CD4-positive, alpha-beta T cell (primary cell): ENCODE measurements at regions of chr6 and their contacts with region 1.

Region 1: GRCh38 chr6:25441663-25442270 is 162.6 kb downstream of the CARMIL1 start:
- DNase-seq: peak in 4 of 14 experiments; percentile 13 to 55 (median 32)
- ATAC-seq: peak; percentile 92
- H3K4me3 ChIP-seq: no peak overlapping the region
- H3K4me3 Mint-ChIP-seq: no peak overlapping the region
- H3K27ac ChIP-seq: peak overlapping the region; percentile 49 to 61
- H3K27ac Mint-ChIP-seq: no peak overlapping the region
- H3K4me1 ChIP-seq: peaks cover 5% of the 10 kb centered on the region
- H3K4me1 Mint-ChIP-seq: peaks cover 27% of the 10 kb centered on the region
- H3K27me3 ChIP-seq: no peaks in the 10 kb centered on the region
- H3K27me3 Mint-ChIP-seq: no peaks in the 10 kb centered on the region
- CTCF ChIP-seq: no peak

Region 2: DNA sequence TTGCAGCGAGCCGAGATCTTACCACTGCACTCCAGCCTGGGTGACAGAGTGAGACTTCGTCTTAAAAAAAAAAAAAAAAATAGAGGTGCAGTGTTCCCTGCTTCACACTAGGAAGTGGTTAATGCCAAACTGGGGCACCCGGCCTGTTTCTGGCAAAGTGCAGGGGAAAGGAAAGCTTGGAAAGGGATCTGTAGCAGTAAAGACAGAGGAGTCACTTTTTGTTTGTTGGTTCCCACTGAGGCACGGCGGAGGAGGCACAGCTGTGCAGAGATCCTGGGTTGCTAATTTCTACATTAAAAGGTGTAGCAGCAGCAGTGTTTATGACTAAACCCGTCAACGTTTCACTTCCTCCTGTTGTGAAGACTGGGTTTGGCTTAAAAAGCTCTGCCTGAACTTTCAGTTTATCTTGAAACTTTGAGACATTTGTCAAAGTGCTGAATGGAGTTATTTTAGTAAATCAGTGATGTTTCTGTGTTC is 37.0 kb before region 1 on chr6:
- CTCF ChIA-PET with region 1: no interaction called
- POLR2A ChIA-PET with region 1: interaction called, 18 read pairs
- intact Hi-C with region 1: no loop called
- DNase-seq: peak; percentile 3 to 66 (median 23)
- ATAC-seq: peak; percentile 85
- H3K4me3 ChIP-seq: peak overlapping the region; percentile 50
- H3K4me3 Mint-ChIP-seq: no peak overlapping the region
- H3K27ac ChIP-seq: peak overlapping the region; percentile 70 to 72
- H3K27ac Mint-ChIP-seq: no peak overlapping the region
- H3K4me1 ChIP-seq: peaks cover 47% of the 10 kb centered on the region
- H3K4me1 Mint-ChIP-seq: no peaks in the 10 kb centered on the region
- H3K27me3 ChIP-seq: no peaks in the 10 kb centered on the region
- H3K27me3 Mint-ChIP-seq: no peaks in the 10 kb centered on the region
- CTCF ChIP-seq: no peak